Right ventricle myocardium inferior (tissue), 1 donor: ENCODE measurements at regions of chr15 and their contacts with region 1.

Region 1: GRCh38 chr15:31554261-31554660 is 227.6 kb downstream of the KLF13 start:
- DNase-seq: peak; percentile 79
- ATAC-seq: peak; percentile 43

Region 2: GRCh38 chr15:31487881-31488425 is 66.3 kb before region 1 on chr15:
- intact Hi-C with region 1: no loop called
- DNase-seq: no peak
- ATAC-seq: peak; percentile 1

Region 3: GRCh38 chr15:31499953-31500765 is 54.1 kb before region 1 on chr15:
- intact Hi-C with region 1: loop called (anchors 10 kb)
- DNase-seq: no peak
- ATAC-seq: no peak